B cell (primary cell): ENCODE measurements at regions of chr11 and their contacts with region 1.

Region 1: GRCh38 chr11:120660024-120660565 is 148.5 kb downstream of the GRIK4 start:
- DNase-seq: peak; percentile 36
- ATAC-seq: no peak
- H3K4me3 ChIP-seq: no peak overlapping the region
- H3K4me3 Mint-ChIP-seq: no peak overlapping the region
- H3K27ac ChIP-seq: no peak overlapping the region
- H3K27ac Mint-ChIP-seq: no peak overlapping the region
- H3K4me1 ChIP-seq: peaks cover 3 to 6% of the 10 kb centered on the region in 2 donors
- H3K4me1 Mint-ChIP-seq: peaks cover 14% of the 10 kb centered on the region
- H3K27me3 ChIP-seq: peaks cover 0 to 3% (median 0%) of the 10 kb centered on the region in 4 experiments
- H3K27me3 Mint-ChIP-seq: peaks cover 18% of the 10 kb centered on the region
- CTCF ChIP-seq: peak; percentile 32

Region 2: GRCh38 chr11:120633616-120634393 is 26.3 kb before region 1 on chr11:
- CTCF ChIA-PET with region 1: no interaction called
- POLR2A ChIA-PET with region 1: no interaction called
- intact Hi-C with region 1: loop called (anchors 1 kb)
- DNase-seq: no peak
- ATAC-seq: no peak
- H3K4me3 ChIP-seq: no peak overlapping the region
- H3K4me3 Mint-ChIP-seq: no peak overlapping the region
- H3K27ac ChIP-seq: no peak overlapping the region
- H3K27ac Mint-ChIP-seq: no peak overlapping the region
- H3K4me1 ChIP-seq: no peaks in the 10 kb centered on the region
- H3K4me1 Mint-ChIP-seq: peaks cover 2% of the 10 kb centered on the region
- H3K27me3 ChIP-seq: no peaks in the 10 kb centered on the region
- H3K27me3 Mint-ChIP-seq: no peaks in the 10 kb centered on the region
- CTCF ChIP-seq: no peak

Region 3: GRCh38 chr11:120807421-120808150 is 147.5 kb after region 1 on chr11:
- CTCF ChIA-PET with region 1: no interaction called
- POLR2A ChIA-PET with region 1: no interaction called
- intact Hi-C with region 1: no loop called
- DNase-seq: no peak
- ATAC-seq: no peak
- H3K4me3 ChIP-seq: no peak overlapping the region
- H3K4me3 Mint-ChIP-seq: no peak overlapping the region
- H3K27ac ChIP-seq: no peak overlapping the region
- H3K27ac Mint-ChIP-seq: no peak overlapping the region
- H3K4me1 ChIP-seq: no peaks in the 10 kb centered on the region
- H3K4me1 Mint-ChIP-seq: no peaks in the 10 kb centered on the region
- H3K27me3 ChIP-seq: peaks cover 0 to 18% (median 0%) of the 10 kb centered on the region in 4 experiments
- H3K27me3 Mint-ChIP-seq: peaks cover 20% of the 10 kb centered on the region
- CTCF ChIP-seq: no peak

Region 4: DNA sequence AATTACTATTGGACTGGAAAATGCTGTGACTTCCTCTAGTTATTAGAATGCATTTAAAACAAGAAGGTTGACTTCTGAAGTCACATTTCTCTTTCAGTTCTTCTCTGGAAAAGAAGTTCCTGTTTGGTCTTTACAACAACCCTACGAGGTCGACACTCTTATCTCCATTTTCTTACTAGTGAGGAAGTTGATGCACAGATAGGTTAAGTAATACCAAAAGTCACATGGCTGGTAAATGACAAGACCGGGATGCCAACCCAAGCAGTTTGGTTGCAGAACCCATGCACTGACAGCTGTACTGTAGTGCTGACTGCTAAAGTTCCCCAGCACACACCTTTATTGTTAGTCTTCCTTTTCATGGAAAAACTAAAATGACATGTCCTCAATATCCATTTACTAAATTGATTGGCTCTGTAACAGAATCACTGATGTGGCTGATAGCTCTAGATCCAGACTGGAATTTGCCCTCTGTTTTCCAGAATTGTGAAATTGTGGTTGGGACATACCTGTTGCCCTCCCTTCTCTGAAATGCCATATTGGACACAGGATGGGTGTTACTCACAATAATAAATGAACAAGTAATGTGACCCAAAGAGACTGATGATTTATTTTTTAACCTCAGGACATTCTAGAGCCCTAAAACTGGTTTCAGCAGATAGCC is 431.5 kb after region 1 on chr11:
- CTCF ChIA-PET with region 1: no interaction called
- POLR2A ChIA-PET with region 1: no interaction called
- intact Hi-C with region 1: no loop called
- DNase-seq: no peak
- ATAC-seq: no peak
- H3K4me3 ChIP-seq: no peak overlapping the region
- H3K4me3 Mint-ChIP-seq: no peak overlapping the region
- H3K27ac ChIP-seq: no peak overlapping the region
- H3K27ac Mint-ChIP-seq: no peak overlapping the region
- H3K4me1 ChIP-seq: no peaks in the 10 kb centered on the region
- H3K4me1 Mint-ChIP-seq: peaks cover 4% of the 10 kb centered on the region
- H3K27me3 ChIP-seq: no peaks in the 10 kb centered on the region
- H3K27me3 Mint-ChIP-seq: no peaks in the 10 kb centered on the region
- CTCF ChIP-seq: no peak